Activated naive CD4-positive, alpha-beta T cell treated with anti-CD3 and anti-CD28 coated beads for 36 hours (primary cell): ENCODE measurements at regions of chr12 and their contacts with region 1.

Region 1: DNA sequence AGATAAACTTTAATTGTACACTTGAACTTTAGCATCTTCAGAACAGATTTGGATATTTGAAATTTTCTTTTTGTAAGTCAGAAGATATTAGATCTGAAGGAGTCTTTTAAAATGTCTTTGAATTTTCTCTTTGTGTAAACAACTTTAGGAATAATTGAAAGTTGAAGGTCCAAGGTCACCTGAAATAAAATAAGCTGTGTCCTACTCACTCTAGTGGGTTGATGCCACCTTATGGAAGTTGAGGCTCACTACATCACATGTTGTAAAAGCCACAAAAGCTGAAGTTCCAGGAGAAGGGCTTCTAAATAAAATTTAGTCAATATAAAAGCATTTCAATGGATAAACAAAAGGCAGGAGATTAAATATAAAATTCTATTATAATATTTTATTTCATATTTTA is 122.0 kb upstream of the ATXN7L3B start:
- DNase-seq: no peak
- H3K4me3 Mint-ChIP-seq: no peak overlapping the region
- H3K27ac Mint-ChIP-seq: no peak overlapping the region
- H3K4me1 Mint-ChIP-seq: no peaks in the 10 kb centered on the region
- H3K27me3 Mint-ChIP-seq: peaks cover 7% of the 10 kb centered on the region

Region 2: DNA sequence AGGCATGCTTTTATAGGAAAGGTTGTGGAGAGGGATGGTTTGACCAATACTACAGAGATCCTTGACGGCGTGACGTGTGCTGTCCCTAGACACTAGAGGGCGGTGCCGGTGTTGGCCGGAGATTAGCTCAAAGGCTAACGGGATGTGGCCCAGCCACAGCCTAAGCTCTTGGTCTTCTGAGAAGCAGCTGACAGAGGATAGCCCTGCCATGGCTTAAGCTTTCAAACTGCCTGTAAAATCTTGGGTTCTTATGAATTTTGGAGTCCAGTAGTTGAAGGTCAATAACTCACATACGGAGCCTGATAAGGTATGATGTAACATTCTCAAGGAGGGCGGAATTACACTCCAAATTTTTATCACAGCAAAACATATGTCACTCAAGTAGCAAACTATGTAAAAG is 393.7 kb before region 1 on chr12:
- CTCF ChIA-PET with region 1: interaction called, 4 read pairs
- intact Hi-C with region 1: loop called (anchors 1 kb)
- DNase-seq: peak; percentile 51
- H3K4me3 Mint-ChIP-seq: no peak overlapping the region
- H3K27ac Mint-ChIP-seq: no peak overlapping the region
- H3K4me1 Mint-ChIP-seq: no peaks in the 10 kb centered on the region
- H3K27me3 Mint-ChIP-seq: no peaks in the 10 kb centered on the region

Region 3: GRCh38 chr12:74111688-74112360 is 303.8 kb before region 1 on chr12:
- CTCF ChIA-PET with region 1: interaction called, 3 read pairs
- intact Hi-C with region 1: loop called (anchors 1 kb)
- DNase-seq: peak; percentile 10
- H3K4me3 Mint-ChIP-seq: no peak overlapping the region
- H3K27ac Mint-ChIP-seq: no peak overlapping the region
- H3K4me1 Mint-ChIP-seq: no peaks in the 10 kb centered on the region
- H3K27me3 Mint-ChIP-seq: no peaks in the 10 kb centered on the region

Region 4: GRCh38 chr12:74537707-74538385 is 122.2 kb after region 1 on chr12 and contains the start of gene ATXN7L3B:
- CTCF ChIA-PET with region 1: interaction called, 3 read pairs
- intact Hi-C with region 1: loop called (anchors 1 kb)
- DNase-seq: peak; percentile 94
- H3K4me3 Mint-ChIP-seq: peak within 1 kb of the TSS; percentile 91
- H3K27ac Mint-ChIP-seq: peak within 1 kb of the TSS; percentile 97
- H3K4me1 Mint-ChIP-seq: peaks cover 48% of the 10 kb centered on the region
- H3K27me3 Mint-ChIP-seq: no peaks in the 10 kb centered on the region
- total RNA-seq, gene ATXN7L3B: 19.8 to 19.9 TPM